H1 (cell line): ENCODE measurements at regions of chr19 and their contacts with region 1.

Region 1: GRCh38 chr19:29404951-29405727 is 120.7 kb upstream of the VSTM2B start:
- DNase-seq: peak; percentile 38 to 67
- H3K4me3 ChIP-seq: peak overlapping the region in 1 of 4 experiments; percentile 39; a peak in 5 of 8 replicates
- H3K27ac ChIP-seq: no peak overlapping the region
- H3K4me1 ChIP-seq: peaks cover 0 to 14% (median 6%) of the 10 kb centered on the region in 4 experiments; a peak in 5 of 7 replicates
- H3K27me3 ChIP-seq: peaks cover 0 to 5% (median 3%) of the 10 kb centered on the region in 4 experiments; a peak in 4 of 7 replicates
- CTCF ChIP-seq: no peak
- EP300 ChIP-seq: no peak
- POLR2A ChIP-seq: no peak
- RAD21 ChIP-seq: no peak

Region 2: DNA sequence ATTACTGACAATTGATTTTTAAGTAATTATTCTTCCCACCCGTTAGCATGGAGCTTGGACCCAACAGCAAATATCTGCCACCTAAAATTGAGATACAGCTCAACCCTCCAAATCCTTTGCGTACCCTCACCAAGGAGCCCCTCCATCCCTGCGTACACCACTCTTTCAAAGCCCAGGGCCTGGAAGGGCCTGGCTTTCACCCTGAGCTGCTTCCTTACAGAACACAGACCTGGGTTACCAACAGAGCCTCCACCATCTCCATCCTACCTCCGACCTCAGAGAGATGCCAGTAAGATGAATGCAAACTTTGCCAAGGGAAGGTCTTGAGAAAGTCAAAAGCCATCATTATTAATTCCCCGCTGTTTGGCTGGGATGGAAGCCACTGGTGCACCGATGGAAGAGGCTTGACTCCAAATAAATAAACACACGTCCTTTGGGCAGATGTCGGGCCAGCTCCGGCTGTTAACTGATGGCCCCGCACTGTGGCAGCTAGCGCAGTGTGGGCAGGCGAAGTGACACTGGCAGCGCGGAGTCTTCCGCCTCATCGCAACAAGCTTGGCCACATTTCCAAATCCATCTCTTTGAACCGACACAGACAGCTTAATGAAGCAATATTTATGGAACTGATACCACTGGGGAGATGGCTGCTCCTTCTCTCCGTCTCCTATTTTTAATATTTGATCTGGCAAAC is 29.6 kb before region 1 on chr19:
- CTCF ChIA-PET with region 1: no interaction called
- POLR2A ChIA-PET with region 1: no interaction called
- DNase-seq: peak in 1 of 2 experiments; percentile 19
- H3K4me3 ChIP-seq: no peak overlapping the region
- H3K27ac ChIP-seq: no peak overlapping the region
- H3K4me1 ChIP-seq: peaks cover 0 to 4% (median 0%) of the 10 kb centered on the region in 4 experiments; a peak in 1 of 7 replicates
- H3K27me3 ChIP-seq: no peaks in the 10 kb centered on the region
- CTCF ChIP-seq: no peak
- EP300 ChIP-seq: no peak
- POLR2A ChIP-seq: no peak
- RAD21 ChIP-seq: no peak

Region 3: DNA sequence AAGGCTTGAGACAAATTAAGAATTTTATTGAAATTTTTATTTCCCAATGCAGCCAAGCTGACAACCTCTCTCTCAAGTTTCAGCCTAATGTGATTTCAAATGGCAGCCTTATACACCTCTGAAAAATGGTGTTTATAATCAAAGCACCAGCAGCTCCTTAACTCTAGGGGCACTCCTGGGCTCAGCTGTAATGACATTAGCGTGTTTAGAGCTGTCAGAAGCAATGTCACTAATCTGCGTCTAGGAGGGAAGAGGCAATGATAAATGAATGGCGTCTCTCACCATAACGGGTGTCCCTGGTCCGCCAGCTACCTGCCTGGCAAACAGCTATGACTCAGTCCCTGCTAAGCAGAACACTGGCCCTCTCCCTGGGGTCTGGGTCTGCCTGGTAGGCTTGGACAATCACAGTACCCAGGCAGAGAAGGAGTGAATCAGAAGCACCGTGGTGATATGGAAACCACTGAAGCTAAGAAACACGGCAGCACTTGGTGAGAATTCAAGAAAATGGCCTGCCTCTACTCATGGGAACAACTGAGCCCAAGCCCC is 11.2 kb before region 1 on chr19:
- CTCF ChIA-PET with region 1: interaction called, 12 read pairs
- POLR2A ChIA-PET with region 1: no interaction called
- DNase-seq: no peak
- H3K4me3 ChIP-seq: no peak overlapping the region
- H3K27ac ChIP-seq: no peak overlapping the region
- H3K4me1 ChIP-seq: peaks cover 0 to 10% (median 4%) of the 10 kb centered on the region in 4 experiments; a peak in 5 of 7 replicates
- H3K27me3 ChIP-seq: no peaks in the 10 kb centered on the region; a peak in 1 of 7 replicates
- CTCF ChIP-seq: peak in 1 of 3 experiments; percentile 51; a peak in 1 of 4 replicates
- EP300 ChIP-seq: no peak
- POLR2A ChIP-seq: no peak
- RAD21 ChIP-seq: peak in 1 of 2 experiments; percentile 36; a peak in 2 of 4 replicates

Region 4: GRCh38 chr19:29415507-29415906 is 10.4 kb after region 1 on chr19:
- CTCF ChIA-PET with region 1: interaction called, 14 read pairs
- POLR2A ChIA-PET with region 1: no interaction called
- DNase-seq: peak in 1 of 2 experiments; percentile 54
- H3K4me3 ChIP-seq: no peak overlapping the region
- H3K27ac ChIP-seq: no peak overlapping the region
- H3K4me1 ChIP-seq: no peaks in the 10 kb centered on the region
- H3K27me3 ChIP-seq: no peaks in the 10 kb centered on the region
- CTCF ChIP-seq: peak; percentile 65 to 75 (median 66)
- EP300 ChIP-seq: no peak
- POLR2A ChIP-seq: no peak
- RAD21 ChIP-seq: peak; percentile 47 to 64